OCI-LY7 (cell line): ENCODE measurements at regions of chr17 and their contacts with region 1.

Region 1: DNA sequence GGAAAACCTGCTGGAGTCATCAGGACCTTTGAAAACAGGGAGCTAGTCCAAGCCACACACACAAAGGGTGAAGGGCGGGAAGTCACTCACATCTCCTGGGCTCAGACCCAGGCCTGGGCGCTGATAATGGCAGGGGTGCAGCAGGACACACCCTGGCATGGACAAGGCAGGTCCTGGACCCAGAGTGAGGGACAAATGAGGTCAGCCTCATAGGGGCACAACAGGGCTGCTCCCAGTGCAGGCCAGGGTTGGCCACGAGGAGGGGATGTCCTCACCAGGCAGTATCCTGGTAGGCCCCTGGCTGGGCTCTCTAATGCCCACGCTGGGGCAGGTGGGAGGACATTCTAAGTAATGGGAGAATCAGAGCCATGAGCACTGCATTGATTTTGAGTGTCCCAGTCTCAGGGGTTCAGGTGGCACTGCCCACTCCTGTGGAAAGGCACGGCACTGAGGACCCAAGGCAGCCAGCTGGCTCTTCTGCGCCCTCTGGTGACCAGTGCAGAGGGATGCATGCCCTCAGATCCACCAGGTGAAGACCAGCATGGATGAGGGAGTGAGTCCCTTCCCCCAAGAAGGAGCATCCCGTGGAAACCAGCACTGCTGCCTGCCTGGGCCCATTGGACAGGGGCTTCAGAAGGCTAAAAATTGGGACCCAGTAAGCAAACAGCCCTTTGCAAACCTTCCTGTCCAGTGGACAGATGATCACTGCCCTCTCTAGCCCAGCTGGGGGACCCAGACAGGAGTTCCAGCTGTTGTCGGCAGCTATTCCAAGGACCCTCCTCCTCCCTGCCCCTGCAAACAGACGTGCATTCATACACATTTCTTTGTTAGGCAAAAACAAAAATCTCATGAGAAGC is 23.4 kb upstream of the SREBF1 start:
- DNase-seq: peak; percentile 73
- H3K4me3 ChIP-seq: no peak overlapping the region
- H3K27ac ChIP-seq: no peak overlapping the region
- H3K4me1 ChIP-seq: no peaks in the 10 kb centered on the region
- CTCF ChIP-seq: peak; percentile 98

Region 2: DNA sequence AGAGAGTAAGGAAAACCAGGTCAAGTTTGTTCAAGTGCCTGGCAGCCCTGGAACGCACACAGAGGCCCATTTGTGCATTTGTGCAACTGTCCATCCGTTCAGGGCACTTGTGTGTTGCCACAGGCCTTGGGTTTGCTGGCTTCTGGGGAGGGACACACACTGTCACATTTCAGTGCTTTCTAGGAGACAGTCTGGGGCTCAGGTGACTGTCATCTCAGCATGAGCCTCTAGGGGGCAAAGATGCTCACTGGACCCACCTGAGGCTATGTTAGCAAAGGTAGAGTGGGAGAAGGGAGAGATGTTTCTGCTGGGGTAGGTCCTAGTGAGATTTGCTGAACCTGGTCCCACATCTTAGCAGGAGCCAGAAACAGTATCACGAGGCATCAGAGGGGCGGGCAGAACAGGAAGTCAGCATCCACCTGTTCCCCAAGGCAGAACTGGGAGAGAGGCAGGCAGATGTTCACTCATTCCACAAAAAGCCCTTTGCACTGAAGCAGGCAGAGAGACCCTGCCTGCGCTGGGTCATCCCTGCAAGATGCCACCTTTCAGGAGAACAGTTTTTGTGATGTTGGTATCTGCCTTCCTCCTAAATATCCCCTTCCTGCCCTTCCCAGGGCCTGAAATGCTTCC is 130.4 kb before region 1 on chr17:
- CTCF ChIA-PET with region 1: no interaction called
- POLR2A ChIA-PET with region 1: no interaction called
- intact Hi-C with region 1: loop called (anchors 5 kb)
- DNase-seq: peak; percentile 71
- H3K4me3 ChIP-seq: no peak overlapping the region
- H3K27ac ChIP-seq: no peak overlapping the region
- H3K4me1 ChIP-seq: peaks cover 10% of the 10 kb centered on the region
- CTCF ChIP-seq: peak; percentile 81

Region 3: DNA sequence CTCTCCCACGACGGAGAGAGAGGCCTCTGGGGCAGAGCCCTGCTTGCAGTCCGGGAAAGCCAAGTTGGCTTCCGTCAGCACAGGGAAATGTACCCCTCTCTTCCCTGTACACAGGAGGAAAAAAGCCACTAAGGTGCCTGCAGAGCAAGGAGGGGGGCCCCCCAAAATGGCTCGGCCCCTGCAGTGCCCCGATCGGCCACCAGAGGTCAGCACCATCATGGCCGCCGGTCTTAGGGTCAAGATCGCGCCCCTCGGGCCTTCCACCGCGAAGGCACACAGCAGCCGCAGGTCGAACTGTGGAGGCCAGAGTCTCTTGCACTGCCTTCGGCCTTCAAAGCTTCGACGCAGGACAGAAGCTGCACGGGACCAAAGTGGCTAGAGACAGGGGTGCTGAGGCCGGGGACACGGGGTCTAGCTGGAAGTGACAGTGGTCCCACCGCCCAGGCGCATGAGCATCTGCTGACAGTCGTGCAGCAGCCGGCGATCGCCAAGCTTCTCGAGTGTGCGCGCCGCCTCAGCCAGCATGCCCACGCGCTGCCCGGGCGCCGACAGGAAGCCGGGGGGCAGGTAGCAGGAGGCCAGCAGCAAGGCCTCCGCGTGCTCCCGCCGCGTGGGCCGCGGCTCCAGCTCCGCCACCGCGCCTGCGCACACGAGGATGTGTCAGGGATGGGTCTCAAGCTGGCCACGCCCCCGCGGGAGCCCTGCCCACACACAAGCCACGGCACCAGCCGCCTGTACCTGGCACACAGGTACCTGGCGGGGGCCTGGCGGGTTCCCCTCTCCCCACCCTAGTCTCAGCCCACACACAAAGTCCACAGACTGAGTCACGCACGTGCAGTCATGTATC is 47.7 kb before region 1 on chr17:
- CTCF ChIA-PET with region 1: no interaction called
- POLR2A ChIA-PET with region 1: interaction called, 3 read pairs
- intact Hi-C with region 1: loop called (anchors 1 kb)
- DNase-seq: peak; percentile 60
- H3K4me3 ChIP-seq: no peak overlapping the region
- H3K27ac ChIP-seq: no peak overlapping the region
- H3K4me1 ChIP-seq: peaks cover 20% of the 10 kb centered on the region
- CTCF ChIP-seq: peak; percentile 96